ENCODE measurements at regions of chr3 and their contacts with region 1.

Region 1: GRCh38 chr3:3038201-3038991 is 71.8 kb downstream of the IL5RA start:
- DNase-seq: peak; percentile 49
- H3K4me3 Mint-ChIP-seq: peak overlapping the region; percentile 37
- H3K27ac Mint-ChIP-seq: no peak overlapping the region
- H3K4me1 Mint-ChIP-seq: peaks cover 13% of the 10 kb centered on the region
- H3K27me3 Mint-ChIP-seq: no peaks in the 10 kb centered on the region
- CTCF ChIP-seq: no peak

Region 2: GRCh38 chr3:3126477-3127431 is 88.4 kb after region 1 on chr3 and contains the start of gene TRNT1:
- CTCF ChIA-PET with region 1: no interaction called
- intact Hi-C with region 1: loop called (anchors 10 kb)
- DNase-seq: peak; percentile 96
- H3K4me3 Mint-ChIP-seq: peak within 1 kb of the TSS; percentile 95
- H3K27ac Mint-ChIP-seq: peak within 1 kb of the TSS; percentile 98
- H3K4me1 Mint-ChIP-seq: no peaks in the 10 kb centered on the region
- H3K27me3 Mint-ChIP-seq: no peaks in the 10 kb centered on the region
- CTCF ChIP-seq: no peak
- total RNA-seq, gene TRNT1: 35.1 and 35.6 TPM in 2 replicates

Measured in Calu3 (cell line).